Dendritic cell treated with granulocyte-macrophage colony-stimulating factor and Interleukin-4, amounts not matched to agents 40 ng/mL and 50 ng/mL, for 4 days (primary cell): ENCODE measurements at regions of chr2 and their contacts with region 1.

Region 1: GRCh38 chr2:112645310-112646101 is at the start of gene SLC20A1:
- H3K4me3 Mint-ChIP-seq: peak within 1 kb of the TSS; percentile 82
- H3K27ac Mint-ChIP-seq: peak within 1 kb of the TSS; percentile 86
- H3K4me1 Mint-ChIP-seq: peaks cover 76% of the 10 kb centered on the region
- H3K27me3 Mint-ChIP-seq: no peaks in the 10 kb centered on the region

Region 2: DNA sequence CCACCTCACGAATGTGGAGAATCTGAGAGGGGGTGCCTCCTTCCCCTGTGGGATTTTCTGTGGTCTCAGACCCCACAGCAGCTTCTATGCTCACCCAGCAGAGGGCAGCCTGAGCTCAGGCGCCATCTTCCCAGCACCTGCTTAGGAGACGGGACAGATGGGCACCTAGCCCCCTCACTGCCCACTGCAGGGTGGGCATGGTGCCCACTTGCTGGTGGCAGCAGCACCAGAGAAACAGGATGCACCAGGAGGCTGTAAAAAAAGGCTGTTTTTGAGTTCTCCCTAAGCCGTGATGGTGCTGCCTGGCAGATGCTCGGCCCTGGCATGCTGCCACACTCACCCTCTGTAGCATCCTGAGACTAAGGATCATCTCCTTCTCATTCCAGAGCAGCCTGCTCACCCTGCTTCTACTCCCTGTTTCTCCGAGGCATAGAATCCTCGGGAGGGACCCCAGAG is 18.9 kb before region 1 on chr2:
- intact Hi-C with region 1: loop called (anchors 2 kb)
- H3K4me3 Mint-ChIP-seq: no peak overlapping the region
- H3K27ac Mint-ChIP-seq: peak overlapping the region; percentile 75
- H3K4me1 Mint-ChIP-seq: peaks cover 72% of the 10 kb centered on the region
- H3K27me3 Mint-ChIP-seq: no peaks in the 10 kb centered on the region

Region 3: GRCh38 chr2:112666764-112667122 is 21.2 kb after region 1 on chr2:
- intact Hi-C with region 1: no loop called
- H3K4me3 Mint-ChIP-seq: no peak overlapping the region
- H3K27ac Mint-ChIP-seq: peak overlapping the region; percentile 78
- H3K4me1 Mint-ChIP-seq: peaks cover 21% of the 10 kb centered on the region
- H3K27me3 Mint-ChIP-seq: no peaks in the 10 kb centered on the region

Region 4: GRCh38 chr2:112692496-112692911 is 47.0 kb after region 1 on chr2:
- intact Hi-C with region 1: loop called (anchors 5 kb)
- H3K4me3 Mint-ChIP-seq: peak overlapping the region; percentile 48
- H3K27ac Mint-ChIP-seq: peak overlapping the region; percentile 93
- H3K4me1 Mint-ChIP-seq: peaks cover 64% of the 10 kb centered on the region
- H3K27me3 Mint-ChIP-seq: no peaks in the 10 kb centered on the region